ENCODE measurements at regions of chr17 and their contacts with region 1.

Region 1: DNA sequence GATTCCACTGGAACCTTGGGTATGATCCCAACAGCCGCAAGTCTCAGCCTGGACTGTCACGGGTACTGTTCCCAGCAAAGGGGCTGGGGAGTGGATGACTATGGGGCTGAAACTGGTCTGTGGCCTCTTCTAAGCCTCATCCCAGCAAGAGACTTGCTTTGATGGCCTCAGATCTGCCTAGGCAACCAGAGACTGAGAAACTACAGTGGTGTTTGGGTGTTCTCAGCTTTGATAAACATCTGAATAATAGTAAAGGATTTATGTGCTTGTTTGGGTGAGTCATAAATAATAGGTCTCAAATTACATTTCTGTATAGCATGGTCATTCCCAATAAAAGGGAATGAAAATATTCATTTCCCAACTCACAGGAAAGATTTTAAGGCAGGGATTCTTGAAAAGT is 30.2 kb upstream of the ULK2 start:
- DNase-seq: no peak
- H3K4me3 ChIP-seq: no peak overlapping the region
- H3K4me1 ChIP-seq: no peaks in the 10 kb centered on the region
- H3K27me3 ChIP-seq: no peaks in the 10 kb centered on the region

Region 2: GRCh38 chr17:19958023-19958422 is 60.1 kb after region 1 on chr17:
- in situ Hi-C with region 1: loop called (anchors 10 kb)
- DNase-seq: peak; percentile 29 to 50
- H3K4me3 ChIP-seq: no peak overlapping the region
- H3K4me1 ChIP-seq: peaks cover 3% of the 10 kb centered on the region
- H3K27me3 ChIP-seq: no peaks in the 10 kb centered on the region

Measured in HAP-1 (cell line).